Thyroid gland (tissue), 4 donors: ENCODE measurements at regions of chr5 and their contacts with region 1.

Region 1: GRCh38 chr5:69166686-69167492 is at the start of gene CCNB1:
- DNase-seq: peak; percentile 98 to 99
- H3K4me3 ChIP-seq: peak within 1 kb of the TSS; percentile 42 to 70 (median 66)
- H3K27ac ChIP-seq: peak within 1 kb of the TSS in 2 of 3 donors; percentile 44 to 47
- H3K4me1 ChIP-seq: peaks cover 0 to 10% of the 10 kb centered on the region in 2 donors
- H3K27me3 ChIP-seq: no peaks in the 10 kb centered on the region
- CTCF ChIP-seq: peak in 1 of 6 experiments; percentile 29
- POLR2A ChIP-seq: peak in 1 of 2 donors; percentile 65
- total RNA-seq, gene CCNB1: 7.7 to 13.4 (median 10.9) TPM

Region 2: GRCh38 chr5:69217548-69218526 is 50.9 kb after region 1 on chr5:
- intact Hi-C with region 1: loop called (anchors 5 kb)
- DNase-seq: peak; percentile 98 to 99
- H3K4me3 ChIP-seq: peak overlapping the region; percentile 67 to 97 (median 72)
- H3K27ac ChIP-seq: peak overlapping the region; percentile 81 to 91 (median 88)
- H3K4me1 ChIP-seq: peaks cover 8 to 9% of the 10 kb centered on the region in 2 donors
- H3K27me3 ChIP-seq: no peaks in the 10 kb centered on the region
- CTCF ChIP-seq: peak in 4 of 6 experiments; percentile 35 to 46 (median 40)
- POLR2A ChIP-seq: peak; percentile 19 to 76